ENCODE measurements at regions of chr1 and their contacts with region 1.

Region 1: GRCh38 chr1:173149887-173150286 is 57.2 kb downstream of the TNFSF4 start:
- DNase-seq: peak; percentile 98
- H3K4me3 Mint-ChIP-seq: no peak overlapping the region
- H3K27ac Mint-ChIP-seq: peak overlapping the region; percentile 80
- H3K4me1 Mint-ChIP-seq: peaks cover 19% of the 10 kb centered on the region
- H3K27me3 Mint-ChIP-seq: no peaks in the 10 kb centered on the region
- CTCF ChIP-seq: no peak

Region 2: GRCh38 chr1:173190101-173190906 is 40.4 kb after region 1 on chr1:
- CTCF ChIA-PET with region 1: no interaction called
- POLR2A ChIA-PET with region 1: interaction called, 11 read pairs
- intact Hi-C with region 1: no loop called
- DNase-seq: peak; percentile 100
- H3K4me3 Mint-ChIP-seq: peak overlapping the region; percentile 44
- H3K27ac Mint-ChIP-seq: peak overlapping the region; percentile 93
- H3K4me1 Mint-ChIP-seq: peaks cover 29% of the 10 kb centered on the region
- H3K27me3 Mint-ChIP-seq: no peaks in the 10 kb centered on the region
- CTCF ChIP-seq: no peak